HCT116 (cell line): ENCODE measurements at regions of chr14 and their contacts with region 1.

Region 1: GRCh38 chr14:22200977-22201605 is 387.9 kb downstream of the DAD1 start:
- DNase-seq: peak; percentile 46
- ATAC-seq: peak; percentile 97
- H3K4me3 ChIP-seq: no peak overlapping the region
- H3K27ac ChIP-seq: no peak overlapping the region
- H3K4me1 ChIP-seq: no peaks in the 10 kb centered on the region
- H3K27me3 ChIP-seq: no peaks in the 10 kb centered on the region
- CTCF ChIP-seq: peak; percentile 58 to 79 (median 78); a peak in 5 of 6 replicates
- POLR2A ChIP-seq: no peak
- RAD21 ChIP-seq: peak; percentile 29; the same call in 1 of the 2 replicates

Region 2: DNA sequence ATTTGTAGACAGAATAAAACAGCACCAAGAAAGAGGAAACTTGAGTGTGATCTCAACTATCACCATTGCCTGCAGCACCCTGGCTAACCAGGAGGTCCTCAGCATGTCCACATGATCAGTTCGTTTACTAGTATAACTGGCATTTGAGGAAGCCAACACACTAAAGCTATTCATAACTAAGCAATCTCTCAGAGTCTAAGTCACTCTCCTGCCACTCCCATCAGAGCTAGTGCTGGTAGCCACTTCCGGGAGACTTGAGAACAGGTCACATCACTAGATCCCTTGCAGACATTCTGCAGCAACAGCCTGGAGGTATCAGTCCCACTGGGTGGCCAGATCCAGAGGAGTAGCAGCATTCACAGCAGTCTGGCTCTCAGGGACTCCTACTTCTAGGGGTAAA is 174.6 kb before region 1 on chr14:
- CTCF ChIA-PET with region 1: no interaction called
- POLR2A ChIA-PET with region 1: no interaction called
- RAD21 ChIA-PET with region 1: no interaction called
- intact Hi-C with region 1: no loop called
- DNase-seq: no peak
- ATAC-seq: peak; percentile 32; the same call in 1 of the 2 replicates
- H3K4me3 ChIP-seq: no peak overlapping the region
- H3K27ac ChIP-seq: no peak overlapping the region
- H3K4me1 ChIP-seq: no peaks in the 10 kb centered on the region
- H3K27me3 ChIP-seq: peaks cover 28% of the 10 kb centered on the region; the same call in 1 of the 2 replicates
- CTCF ChIP-seq: no peak
- POLR2A ChIP-seq: no peak
- RAD21 ChIP-seq: no peak

Region 3: GRCh38 chr14:22122227-22122818 is 78.8 kb before region 1 on chr14:
- CTCF ChIA-PET with region 1: interaction called, 13 read pairs
- POLR2A ChIA-PET with region 1: interaction called, 3 read pairs
- RAD21 ChIA-PET with region 1: no interaction called
- intact Hi-C with region 1: no loop called
- DNase-seq: no peak
- ATAC-seq: no peak
- H3K4me3 ChIP-seq: no peak overlapping the region
- H3K27ac ChIP-seq: no peak overlapping the region
- H3K4me1 ChIP-seq: no peaks in the 10 kb centered on the region
- H3K27me3 ChIP-seq: peaks cover 27% of the 10 kb centered on the region
- CTCF ChIP-seq: peak in 2 of 3 experiments; percentile 19 to 28; a peak in 3 of 6 replicates
- POLR2A ChIP-seq: no peak
- RAD21 ChIP-seq: 0 out of 2 replicates have a peak, but pooled peaks have one; percentile 10

Region 4: DNA sequence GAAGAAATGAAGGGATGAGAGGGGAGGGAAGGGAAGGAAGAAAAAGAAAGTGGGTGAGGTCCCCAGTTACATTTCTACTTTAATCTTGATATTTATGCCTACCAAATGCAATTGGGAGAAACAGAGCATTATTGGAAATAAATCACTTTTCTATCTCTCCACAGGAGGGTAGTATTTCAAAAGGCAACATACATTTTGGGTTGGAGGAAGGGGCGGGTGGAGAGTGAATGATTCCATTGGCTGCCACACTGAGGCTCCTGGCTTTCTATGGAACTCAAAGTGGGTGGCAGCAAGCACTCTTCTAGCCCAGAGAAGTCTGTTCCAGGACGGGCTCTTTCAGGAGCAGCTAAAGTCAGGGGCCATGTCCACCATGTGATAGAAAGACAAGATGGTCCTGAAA is 53.4 kb before region 1 on chr14:
- CTCF ChIA-PET with region 1: no interaction called
- POLR2A ChIA-PET with region 1: no interaction called
- RAD21 ChIA-PET with region 1: no interaction called
- intact Hi-C with region 1: no loop called
- DNase-seq: no peak
- ATAC-seq: no peak
- H3K4me3 ChIP-seq: no peak overlapping the region
- H3K27ac ChIP-seq: no peak overlapping the region
- H3K4me1 ChIP-seq: no peaks in the 10 kb centered on the region
- H3K27me3 ChIP-seq: peaks cover 46% of the 10 kb centered on the region
- CTCF ChIP-seq: no peak
- POLR2A ChIP-seq: no peak
- RAD21 ChIP-seq: no peak

Region 5: DNA sequence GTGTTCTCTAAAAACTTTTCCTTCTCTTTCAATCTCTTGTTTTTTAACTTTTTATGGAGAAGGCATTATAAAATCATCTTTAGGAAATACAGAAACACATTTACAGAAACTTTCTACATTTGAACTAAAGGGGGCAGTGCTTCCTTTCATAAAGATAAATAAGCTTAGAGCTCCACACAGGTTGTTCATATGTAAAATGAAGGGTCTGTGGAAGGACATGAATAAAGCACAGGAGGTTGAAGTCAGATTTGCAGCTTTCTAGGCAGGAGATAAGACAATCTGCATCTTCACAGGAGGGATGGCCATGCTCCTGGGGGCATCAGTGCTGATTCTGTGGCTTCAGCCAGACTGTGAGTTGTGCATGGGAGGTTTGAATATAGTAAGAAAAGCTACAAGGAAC is 38.0 kb before region 1 on chr14:
- CTCF ChIA-PET with region 1: interaction called, 11 read pairs
- POLR2A ChIA-PET with region 1: no interaction called
- RAD21 ChIA-PET with region 1: no interaction called
- intact Hi-C with region 1: no loop called
- DNase-seq: no peak
- ATAC-seq: no peak
- H3K4me3 ChIP-seq: no peak overlapping the region
- H3K27ac ChIP-seq: no peak overlapping the region
- H3K4me1 ChIP-seq: no peaks in the 10 kb centered on the region
- H3K27me3 ChIP-seq: peaks cover 38% of the 10 kb centered on the region; the same call in 1 of the 2 replicates
- CTCF ChIP-seq: peak in 1 of 3 experiments; percentile 44; a peak in 2 of 6 replicates
- POLR2A ChIP-seq: no peak
- RAD21 ChIP-seq: peak; percentile 19; the same call in 1 of the 2 replicates

Region 6: GRCh38 chr14:22185191-22185590 is 15.9 kb before region 1 on chr14:
- CTCF ChIA-PET with region 1: interaction called, 21 read pairs
- POLR2A ChIA-PET with region 1: no interaction called
- RAD21 ChIA-PET with region 1: no interaction called
- intact Hi-C with region 1: no loop called
- DNase-seq: no peak
- ATAC-seq: peak; percentile 47; the same call in 1 of the 2 replicates
- H3K4me3 ChIP-seq: no peak overlapping the region
- H3K27ac ChIP-seq: no peak overlapping the region
- H3K4me1 ChIP-seq: no peaks in the 10 kb centered on the region
- H3K27me3 ChIP-seq: peaks cover 38% of the 10 kb centered on the region; the same call in 1 of the 2 replicates
- CTCF ChIP-seq: no peak; a peak in 2 of 6 replicates
- POLR2A ChIP-seq: no peak
- RAD21 ChIP-seq: no peak

Region 7: GRCh38 chr14:22190411-22191191 is 10.5 kb before region 1 on chr14:
- CTCF ChIA-PET with region 1: interaction called, 21 read pairs
- POLR2A ChIA-PET with region 1: no interaction called
- RAD21 ChIA-PET with region 1: no interaction called
- intact Hi-C with region 1: no loop called
- DNase-seq: no peak
- ATAC-seq: no peak
- H3K4me3 ChIP-seq: no peak overlapping the region
- H3K27ac ChIP-seq: no peak overlapping the region
- H3K4me1 ChIP-seq: no peaks in the 10 kb centered on the region
- H3K27me3 ChIP-seq: peaks cover 14% of the 10 kb centered on the region; the same call in 1 of the 2 replicates
- CTCF ChIP-seq: no peak
- POLR2A ChIP-seq: no peak
- RAD21 ChIP-seq: no peak

Region 8: GRCh38 chr14:22221508-22221907 is 20.4 kb after region 1 on chr14:
- CTCF ChIA-PET with region 1: interaction called, 22 read pairs
- POLR2A ChIA-PET with region 1: no interaction called
- RAD21 ChIA-PET with region 1: no interaction called
- intact Hi-C with region 1: no loop called
- DNase-seq: peak; percentile 12
- ATAC-seq: no peak
- H3K4me3 ChIP-seq: no peak overlapping the region
- H3K27ac ChIP-seq: no peak overlapping the region
- H3K4me1 ChIP-seq: no peaks in the 10 kb centered on the region
- H3K27me3 ChIP-seq: peaks cover 16% of the 10 kb centered on the region
- CTCF ChIP-seq: peak; percentile 4 to 58 (median 46); a peak in 4 of 6 replicates
- POLR2A ChIP-seq: no peak
- RAD21 ChIP-seq: no peak

Region 9: DNA sequence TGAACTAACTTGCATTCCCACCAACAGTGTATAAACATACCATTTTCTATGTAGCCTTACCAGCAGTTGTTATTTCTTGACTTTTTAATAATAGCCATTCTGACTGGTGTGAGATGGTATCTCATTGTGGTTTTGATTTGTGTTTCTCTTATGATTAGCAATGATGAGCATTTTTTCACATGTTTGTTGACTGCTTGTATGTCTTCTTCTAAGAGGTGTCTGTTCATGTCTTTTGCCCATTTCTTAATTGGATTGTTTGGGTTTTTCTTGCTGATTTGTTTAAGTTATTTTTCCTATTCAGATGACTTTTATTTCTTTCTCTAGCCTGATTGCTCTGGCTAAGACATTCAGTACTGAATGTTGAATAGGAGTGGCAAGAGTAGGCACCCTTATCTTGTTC is 157.6 kb after region 1 on chr14:
- CTCF ChIA-PET with region 1: no interaction called
- POLR2A ChIA-PET with region 1: no interaction called
- RAD21 ChIA-PET with region 1: no interaction called
- intact Hi-C with region 1: no loop called
- DNase-seq: no peak
- ATAC-seq: no peak
- H3K4me3 ChIP-seq: no peak overlapping the region
- H3K27ac ChIP-seq: no peak overlapping the region
- H3K4me1 ChIP-seq: no peaks in the 10 kb centered on the region
- H3K27me3 ChIP-seq: no peaks in the 10 kb centered on the region
- CTCF ChIP-seq: no peak
- POLR2A ChIP-seq: no peak
- RAD21 ChIP-seq: no peak